Activated CD4-positive, alpha-beta memory T cell treated with anti-CD3 and anti-CD28 coated beads for 36 hours (primary cell): ENCODE measurements at regions of chr6 and their contacts with region 1.

Region 1: DNA sequence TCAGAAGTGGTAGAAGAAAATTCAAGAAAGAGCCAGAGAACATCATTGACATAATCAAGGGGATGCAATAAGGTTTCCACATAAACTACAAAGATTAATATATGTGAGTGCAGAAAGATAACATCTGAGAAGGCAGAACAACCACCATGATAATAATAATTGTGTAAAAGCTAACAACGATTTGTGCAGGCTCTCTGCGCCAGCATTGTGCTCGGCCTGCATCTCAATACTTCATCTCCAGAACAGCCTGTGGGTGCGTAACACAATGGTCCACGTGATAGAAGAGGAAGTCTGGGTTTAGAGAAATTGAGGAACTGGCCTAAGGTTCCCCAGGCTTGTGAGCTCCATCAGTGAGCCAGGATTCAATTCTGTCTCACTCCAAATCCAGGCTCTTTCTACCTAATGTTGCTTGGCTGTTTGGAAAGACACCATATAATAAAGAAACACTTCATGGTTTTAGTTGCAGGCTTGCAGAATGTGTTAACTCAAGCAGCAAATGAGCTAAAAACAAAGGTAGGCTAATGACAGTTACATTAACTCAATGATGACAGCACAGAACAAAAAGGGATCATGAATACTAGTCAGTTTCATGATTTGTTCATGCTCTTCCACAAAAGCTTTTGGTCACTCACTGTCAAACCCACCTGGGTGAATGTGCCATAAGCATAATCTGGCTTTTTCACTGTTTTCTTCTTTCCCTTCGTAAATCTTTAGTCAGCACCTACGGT is 71.2 kb downstream of the LY86 start:
- DNase-seq: no peak
- H3K4me3 Mint-ChIP-seq: no peak overlapping the region
- H3K27ac Mint-ChIP-seq: peak overlapping the region; percentile 89
- H3K4me1 Mint-ChIP-seq: peaks cover 54% of the 10 kb centered on the region
- H3K27me3 Mint-ChIP-seq: peaks cover 2% of the 10 kb centered on the region

Region 2: GRCh38 chr6:5590187-5590586 is 1069.6 kb before region 1 on chr6:
- CTCF ChIA-PET with region 1: no interaction called
- POLR2A ChIA-PET with region 1: no interaction called
- intact Hi-C with region 1: no loop called
- DNase-seq: no peak
- H3K4me3 Mint-ChIP-seq: no peak overlapping the region
- H3K27ac Mint-ChIP-seq: no peak overlapping the region
- H3K4me1 Mint-ChIP-seq: no peaks in the 10 kb centered on the region
- H3K27me3 Mint-ChIP-seq: no peaks in the 10 kb centered on the region

Region 3: GRCh38 chr6:6556738-6557505 is 102.8 kb before region 1 on chr6:
- CTCF ChIA-PET with region 1: no interaction called
- POLR2A ChIA-PET with region 1: no interaction called
- intact Hi-C with region 1: loop called (anchors 2 kb)
- DNase-seq: peak; percentile 62
- H3K4me3 Mint-ChIP-seq: no peak overlapping the region
- H3K27ac Mint-ChIP-seq: no peak overlapping the region
- H3K4me1 Mint-ChIP-seq: peaks cover 21% of the 10 kb centered on the region
- H3K27me3 Mint-ChIP-seq: peaks cover 2% of the 10 kb centered on the region

Region 4: GRCh38 chr6:6591778-6592465 is 67.8 kb before region 1 on chr6:
- CTCF ChIA-PET with region 1: no interaction called
- POLR2A ChIA-PET with region 1: no interaction called
- intact Hi-C with region 1: loop called (anchors 5 kb)
- DNase-seq: no peak
- H3K4me3 Mint-ChIP-seq: no peak overlapping the region
- H3K27ac Mint-ChIP-seq: peak overlapping the region; percentile 39
- H3K4me1 Mint-ChIP-seq: peaks cover 57% of the 10 kb centered on the region
- H3K27me3 Mint-ChIP-seq: no peaks in the 10 kb centered on the region

Region 5: DNA sequence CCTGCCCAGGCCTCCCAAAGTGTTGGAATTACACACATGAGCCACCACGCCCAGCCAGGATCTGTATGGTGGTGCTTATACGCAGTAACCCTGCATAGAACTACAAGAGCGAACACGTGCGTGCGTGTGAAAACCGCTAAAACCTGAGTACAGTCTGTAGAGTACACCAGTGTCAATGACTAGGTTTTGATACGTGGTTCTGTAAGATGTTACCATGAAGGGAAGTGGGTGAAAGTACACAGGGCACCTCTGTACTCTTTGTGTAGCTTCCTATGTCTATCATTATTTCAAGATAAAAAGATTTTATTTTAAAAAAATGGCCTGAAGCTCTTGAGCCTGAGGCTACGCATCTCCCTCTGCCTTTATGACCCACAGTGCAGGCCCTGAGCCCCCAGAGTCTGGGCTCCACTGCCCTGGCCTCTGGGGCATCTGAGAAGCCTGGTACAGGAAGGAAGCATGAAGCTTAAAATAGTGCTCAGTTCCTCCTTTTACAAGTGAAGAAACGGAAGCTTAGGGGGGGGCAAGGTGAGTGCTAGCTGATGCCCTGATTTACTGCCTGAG is 49.7 kb before region 1 on chr6:
- CTCF ChIA-PET with region 1: interaction called, 3 read pairs
- POLR2A ChIA-PET with region 1: no interaction called
- intact Hi-C with region 1: loop called (anchors 2 kb)
- DNase-seq: peak; percentile 59
- H3K4me3 Mint-ChIP-seq: no peak overlapping the region
- H3K27ac Mint-ChIP-seq: peak overlapping the region; percentile 60
- H3K4me1 Mint-ChIP-seq: peaks cover 53% of the 10 kb centered on the region
- H3K27me3 Mint-ChIP-seq: no peaks in the 10 kb centered on the region

Region 6: DNA sequence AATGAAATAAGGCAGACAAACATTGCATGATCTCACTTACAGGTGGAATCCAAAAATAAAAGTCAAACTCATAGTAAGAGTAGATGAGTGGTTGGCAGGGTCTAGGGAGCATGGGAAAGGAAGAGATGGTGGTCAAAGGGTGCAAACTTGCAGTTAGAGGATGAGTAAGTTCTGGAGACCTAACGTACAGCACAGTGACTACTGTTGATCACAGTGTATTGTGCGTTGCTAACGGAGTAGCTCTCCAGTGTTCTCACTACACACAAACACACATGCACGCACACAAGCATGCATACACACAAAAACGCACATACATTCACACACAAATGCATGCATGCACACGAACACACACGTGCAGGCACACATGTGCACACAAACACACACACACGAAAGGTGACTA is 16.4 kb before region 1 on chr6:
- CTCF ChIA-PET with region 1: no interaction called
- POLR2A ChIA-PET with region 1: no interaction called
- intact Hi-C with region 1: loop called (anchors 1 kb)
- DNase-seq: no peak
- H3K4me3 Mint-ChIP-seq: no peak overlapping the region
- H3K27ac Mint-ChIP-seq: no peak overlapping the region
- H3K4me1 Mint-ChIP-seq: peaks cover 6% of the 10 kb centered on the region
- H3K27me3 Mint-ChIP-seq: no peaks in the 10 kb centered on the region

Region 7: DNA sequence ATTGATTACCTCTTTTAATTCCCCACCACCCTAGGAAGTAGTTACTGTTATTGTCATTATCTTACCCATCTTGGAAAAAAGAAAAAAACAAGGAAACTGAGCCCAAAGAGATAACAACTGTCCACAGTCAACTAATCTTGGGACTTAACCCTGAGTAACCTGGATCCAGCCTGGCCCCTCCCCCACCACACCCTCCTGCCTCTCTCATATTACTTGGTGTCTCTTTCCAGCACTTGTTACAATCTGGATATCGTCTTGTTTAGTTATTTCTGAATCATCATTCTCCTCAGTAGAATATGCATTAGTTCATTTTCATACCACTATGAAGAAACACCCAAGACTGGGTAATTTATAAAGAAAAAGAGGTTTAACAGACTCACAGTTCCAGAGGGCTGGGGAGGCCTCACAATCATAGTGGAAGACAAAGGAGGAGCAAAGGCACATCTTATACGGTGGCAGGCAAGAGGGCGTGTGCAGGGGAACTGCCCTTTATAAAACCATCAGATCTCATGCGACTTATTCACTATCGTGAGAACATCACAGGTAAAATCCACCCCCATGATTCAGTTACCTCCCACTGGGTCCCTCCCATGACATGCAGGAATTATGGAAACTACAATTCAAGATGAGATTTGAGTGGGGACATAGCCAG is 10.9 kb before region 1 on chr6:
- CTCF ChIA-PET with region 1: no interaction called
- POLR2A ChIA-PET with region 1: no interaction called
- intact Hi-C with region 1: loop called (anchors 1 kb)
- DNase-seq: no peak
- H3K4me3 Mint-ChIP-seq: no peak overlapping the region
- H3K27ac Mint-ChIP-seq: no peak overlapping the region
- H3K4me1 Mint-ChIP-seq: peaks cover 30% of the 10 kb centered on the region
- H3K27me3 Mint-ChIP-seq: no peaks in the 10 kb centered on the region

Region 8: GRCh38 chr6:6960571-6961251 is 300.9 kb after region 1 on chr6:
- CTCF ChIA-PET with region 1: no interaction called
- POLR2A ChIA-PET with region 1: no interaction called
- intact Hi-C with region 1: no loop called
- DNase-seq: no peak
- H3K4me3 Mint-ChIP-seq: no peak overlapping the region
- H3K27ac Mint-ChIP-seq: no peak overlapping the region
- H3K4me1 Mint-ChIP-seq: no peaks in the 10 kb centered on the region
- H3K27me3 Mint-ChIP-seq: peaks cover 4% of the 10 kb centered on the region